GM12878 (cell line): ENCODE measurements at regions of chrX and their contacts with region 1.

Region 1: GRCh38 chrX:130984782-130985181 is 73.4 kb upstream of the ARHGAP36 start:
- DNase-seq: no peak
- ATAC-seq: no peak
- H3K4me3 ChIP-seq: no peak overlapping the region
- H3K27ac ChIP-seq: no peak overlapping the region
- H3K4me1 ChIP-seq: no peaks in the 10 kb centered on the region
- H3K27me3 ChIP-seq: no peaks in the 10 kb centered on the region
- CTCF ChIP-seq: no peak
- EP300 ChIP-seq: no peak
- POLR2A ChIP-seq: no peak
- RAD21 ChIP-seq: no peak

Region 2: DNA sequence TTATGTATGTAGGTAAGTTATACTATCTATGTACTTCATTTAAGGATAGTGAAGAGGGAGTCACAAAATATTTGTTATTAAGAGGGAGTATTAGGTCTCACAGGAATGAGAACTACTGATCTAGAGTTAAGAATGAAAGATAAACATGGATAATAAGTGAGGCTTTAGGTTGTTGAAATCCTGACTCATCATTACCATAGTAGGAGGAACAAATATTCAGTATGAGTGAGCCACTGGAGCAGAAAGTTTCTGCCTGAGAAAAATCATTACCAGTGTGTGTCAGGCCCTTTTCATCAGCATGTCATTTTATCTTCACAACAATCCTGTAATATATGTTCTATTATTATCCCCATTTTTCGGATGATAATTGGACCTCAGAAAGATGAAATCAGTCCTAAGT is 331.5 kb after region 1 on chrX:
- CTCF ChIA-PET with region 1: no interaction called
- POLR2A ChIA-PET with region 1: no interaction called
- RAD21 ChIA-PET with region 1: no interaction called
- SMC1A ChIA-PET with region 1: no interaction called
- in situ Hi-C with region 1: no loop called
- intact Hi-C with region 1: loop called (anchors 10 kb)
- DNase-seq: no peak
- ATAC-seq: no peak
- H3K4me3 ChIP-seq: no peak overlapping the region
- H3K27ac ChIP-seq: no peak overlapping the region
- H3K4me1 ChIP-seq: no peaks in the 10 kb centered on the region
- H3K27me3 ChIP-seq: no peaks in the 10 kb centered on the region
- CTCF ChIP-seq: no peak
- EP300 ChIP-seq: no peak
- POLR2A ChIP-seq: no peak
- RAD21 ChIP-seq: no peak

Region 3: GRCh38 chrX:131783555-131784308 is 799.0 kb after region 1 on chrX:
- CTCF ChIA-PET with region 1: no interaction called
- POLR2A ChIA-PET with region 1: no interaction called
- RAD21 ChIA-PET with region 1: no interaction called
- SMC1A ChIA-PET with region 1: no interaction called
- in situ Hi-C with region 1: no loop called
- intact Hi-C with region 1: no loop called
- DNase-seq: peak; percentile 90
- ATAC-seq: peak; percentile 74
- H3K4me3 ChIP-seq: peak overlapping the region; percentile 9; the same call in 1 of the 2 replicates
- H3K27ac ChIP-seq: no peak overlapping the region
- H3K4me1 ChIP-seq: no peaks in the 10 kb centered on the region
- H3K27me3 ChIP-seq: no peaks in the 10 kb centered on the region
- CTCF ChIP-seq: peak; percentile 41 to 71 (median 51); a peak in 5 of 6 replicates
- EP300 ChIP-seq: no peak
- POLR2A ChIP-seq: no peak
- RAD21 ChIP-seq: peak; percentile 77